ENCODE measurements at regions of chr3 and their contacts with region 1.

Region 1: GRCh38 chr3:48556793-48557626 is at the start of gene PFKFB4:
- DNase-seq: peak; percentile 99
- H3K4me3 Mint-ChIP-seq: peak within 1 kb of the TSS; percentile 86
- H3K27ac Mint-ChIP-seq: peak within 1 kb of the TSS; percentile 93
- H3K4me1 Mint-ChIP-seq: peaks cover 51% of the 10 kb centered on the region
- H3K27me3 Mint-ChIP-seq: no peaks in the 10 kb centered on the region
- total RNA-seq, gene PFKFB4: 53.0 and 57.0 TPM in 2 replicates

Region 2: DNA sequence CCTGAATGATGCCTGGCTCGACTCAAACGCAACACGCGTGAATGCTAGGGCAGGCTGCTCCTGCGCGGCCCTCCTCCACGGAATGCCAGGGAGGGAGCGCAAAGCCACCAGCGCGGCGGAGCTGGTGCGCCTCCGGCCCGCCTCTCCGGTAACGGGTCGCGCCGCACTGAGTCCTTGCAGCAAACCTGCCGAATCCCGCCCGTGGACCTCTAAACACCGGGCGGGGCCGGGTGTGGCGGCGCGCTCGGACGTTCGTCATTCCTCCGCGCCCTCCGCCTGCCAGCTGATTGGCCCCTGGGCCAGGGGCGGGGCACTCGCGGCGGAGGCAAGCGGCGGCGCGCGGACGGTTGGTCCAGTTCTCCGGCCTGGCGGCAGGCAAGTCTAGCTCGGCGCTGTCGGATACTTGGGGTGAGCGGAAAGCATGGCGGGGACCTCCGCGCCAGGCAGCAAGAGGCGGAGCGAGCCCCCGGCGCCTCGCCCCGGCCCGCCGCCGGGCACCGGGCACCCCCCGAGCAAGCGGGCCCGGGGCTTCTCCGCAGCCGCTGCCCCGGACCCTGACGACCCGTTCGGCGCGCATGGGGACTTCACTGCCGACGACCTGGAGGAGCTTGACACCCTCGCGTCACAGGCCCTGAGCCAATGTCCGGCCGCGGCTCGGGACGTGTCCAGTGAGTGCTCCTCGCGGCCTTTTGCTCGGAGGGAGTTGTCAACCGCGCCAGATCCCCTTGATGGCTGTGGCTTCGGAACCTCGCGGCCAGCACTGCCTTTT is 110.4 kb before region 1 on chr3 and contains the start of gene ATRIP:
- intact Hi-C with region 1: loop called (anchors 2 kb)
- DNase-seq: peak; percentile 87
- H3K4me3 Mint-ChIP-seq: peak within 1 kb of the TSS; percentile 94
- H3K27ac Mint-ChIP-seq: peak within 1 kb of the TSS; percentile 81
- H3K4me1 Mint-ChIP-seq: peaks cover 30% of the 10 kb centered on the region
- H3K27me3 Mint-ChIP-seq: no peaks in the 10 kb centered on the region
- total RNA-seq, gene ATRIP: 16.9 and 17.5 TPM in 2 replicates

Region 3: GRCh38 chr3:48514436-48515227 is 42.4 kb before region 1 on chr3:
- intact Hi-C with region 1: loop called (anchors 5 kb)
- DNase-seq: peak; percentile 65
- H3K4me3 Mint-ChIP-seq: no peak overlapping the region
- H3K27ac Mint-ChIP-seq: no peak overlapping the region
- H3K4me1 Mint-ChIP-seq: peaks cover 50% of the 10 kb centered on the region
- H3K27me3 Mint-ChIP-seq: no peaks in the 10 kb centered on the region

Region 4: DNA sequence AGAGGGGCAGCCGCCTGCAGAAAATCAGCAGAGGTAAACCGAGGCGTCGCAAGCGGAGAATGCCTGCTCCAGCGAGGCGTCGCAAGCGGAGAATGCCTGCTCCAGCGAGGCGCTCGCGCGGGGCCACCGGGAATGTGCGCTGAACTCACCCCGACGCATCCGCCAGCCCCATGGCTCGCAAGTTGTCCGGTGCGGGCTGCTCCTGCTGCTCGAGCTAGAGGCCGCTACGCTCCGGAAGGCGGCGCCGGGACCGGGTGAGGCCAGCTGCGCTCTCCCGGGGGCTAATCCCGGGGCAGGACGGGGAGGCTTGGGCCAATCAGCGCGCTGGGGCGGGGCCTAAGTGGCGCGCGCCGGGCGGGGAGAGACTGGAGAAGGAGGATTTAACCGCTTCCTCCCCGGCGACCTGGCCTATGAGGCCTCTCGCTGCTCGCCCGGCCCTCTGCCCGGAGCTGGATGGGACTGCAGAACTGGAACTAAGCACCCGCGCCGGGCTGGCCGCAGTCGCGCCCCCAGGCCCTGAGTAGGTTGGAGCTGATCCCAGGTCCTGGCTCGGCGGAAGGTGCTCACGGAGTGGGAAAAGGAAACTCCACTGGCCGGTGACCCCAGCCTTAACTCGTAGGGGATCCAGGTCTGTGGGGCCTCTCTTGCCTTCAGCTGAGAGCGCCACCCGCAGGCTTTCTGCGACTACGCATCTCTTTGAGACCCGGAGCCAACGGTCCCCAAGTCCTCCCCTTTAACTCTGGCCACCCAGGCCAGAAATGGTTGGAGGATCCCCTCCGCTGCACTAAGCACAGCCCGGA is 78.4 kb after region 1 on chr3 and contains the start of gene SLC26A6:
- intact Hi-C with region 1: loop called (anchors 1 kb)
- DNase-seq: peak; percentile 94
- H3K4me3 Mint-ChIP-seq: peak within 1 kb of the TSS; percentile 92
- H3K27ac Mint-ChIP-seq: peak within 1 kb of the TSS; percentile 87
- H3K4me1 Mint-ChIP-seq: peaks cover 21% of the 10 kb centered on the region
- H3K27me3 Mint-ChIP-seq: no peaks in the 10 kb centered on the region
- total RNA-seq, gene SLC26A6: 85.1 and 89.6 TPM in 2 replicates

Measured in activated T-helper 2 cell treated with anti-CD3 and anti-CD28 coated beads, Interferon-gamma antibody, Interleukin-2, Interleukin-4, amounts not matched to agents 10 μg/mL and 5 μg/mL and 100 μg/mL, durations not matched to agents 14 hours and 24 hours and 36 hours (primary cell).